Left cardiac atrium (tissue), 4 donors: ENCODE measurements at regions of chr2 and their contacts with region 1.

Region 1: GRCh38 chr2:10043906-10044601 is 704 bp downstream of the KLF11 start:
- DNase-seq: peak; percentile 99
- ATAC-seq: peak; percentile 78 to 83

Region 2: GRCh38 chr2:9799665-9800632 is 244.1 kb before region 1 on chr2:
- intact Hi-C with region 1: loop called in 1 of 2 experiments (anchors 5 kb)
- DNase-seq: peak; percentile 89
- ATAC-seq: peak; percentile 80 to 90

Region 3: GRCh38 chr2:9813312-9814133 is 230.5 kb before region 1 on chr2:
- intact Hi-C with region 1: loop called (anchors 5 kb)
- DNase-seq: peak; percentile 78
- ATAC-seq: peak; percentile 84 to 87

Region 4: GRCh38 chr2:9885036-9885684 is 158.9 kb before region 1 on chr2:
- intact Hi-C with region 1: no loop called
- DNase-seq: no peak
- ATAC-seq: no peak

Region 5: DNA sequence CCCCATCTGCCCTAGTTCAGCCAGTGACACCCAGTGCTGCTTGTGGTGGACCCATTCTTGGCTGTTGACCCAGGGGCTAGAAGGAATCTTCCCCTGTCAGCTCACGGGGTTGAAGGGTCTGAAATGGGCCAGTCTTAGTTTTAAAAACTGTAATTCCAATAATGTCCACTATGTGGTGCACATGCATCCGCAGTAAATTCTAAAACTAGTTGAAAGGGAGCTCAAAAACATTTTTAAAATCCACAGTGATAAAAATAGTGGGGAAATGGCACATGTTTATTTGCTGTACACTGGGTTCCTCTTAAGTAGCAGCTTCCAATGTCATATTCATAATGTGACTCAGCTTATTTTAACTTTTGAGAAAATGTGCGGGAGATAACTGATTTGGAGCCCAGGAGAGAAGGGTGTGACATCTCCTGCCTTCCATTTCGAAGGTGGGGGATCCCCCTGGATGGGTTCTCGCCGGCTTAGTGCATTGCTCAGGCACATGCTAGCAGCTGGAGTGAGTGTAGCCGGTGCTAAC is 59.8 kb before region 1 on chr2:
- intact Hi-C with region 1: loop called in 1 of 2 experiments (anchors 2 kb)
- DNase-seq: no peak
- ATAC-seq: peak; percentile 54 to 67